Cardiac septum (tissue), 1 donor: ENCODE measurements at regions of chr5 and their contacts with region 1.

Region 1: DNA sequence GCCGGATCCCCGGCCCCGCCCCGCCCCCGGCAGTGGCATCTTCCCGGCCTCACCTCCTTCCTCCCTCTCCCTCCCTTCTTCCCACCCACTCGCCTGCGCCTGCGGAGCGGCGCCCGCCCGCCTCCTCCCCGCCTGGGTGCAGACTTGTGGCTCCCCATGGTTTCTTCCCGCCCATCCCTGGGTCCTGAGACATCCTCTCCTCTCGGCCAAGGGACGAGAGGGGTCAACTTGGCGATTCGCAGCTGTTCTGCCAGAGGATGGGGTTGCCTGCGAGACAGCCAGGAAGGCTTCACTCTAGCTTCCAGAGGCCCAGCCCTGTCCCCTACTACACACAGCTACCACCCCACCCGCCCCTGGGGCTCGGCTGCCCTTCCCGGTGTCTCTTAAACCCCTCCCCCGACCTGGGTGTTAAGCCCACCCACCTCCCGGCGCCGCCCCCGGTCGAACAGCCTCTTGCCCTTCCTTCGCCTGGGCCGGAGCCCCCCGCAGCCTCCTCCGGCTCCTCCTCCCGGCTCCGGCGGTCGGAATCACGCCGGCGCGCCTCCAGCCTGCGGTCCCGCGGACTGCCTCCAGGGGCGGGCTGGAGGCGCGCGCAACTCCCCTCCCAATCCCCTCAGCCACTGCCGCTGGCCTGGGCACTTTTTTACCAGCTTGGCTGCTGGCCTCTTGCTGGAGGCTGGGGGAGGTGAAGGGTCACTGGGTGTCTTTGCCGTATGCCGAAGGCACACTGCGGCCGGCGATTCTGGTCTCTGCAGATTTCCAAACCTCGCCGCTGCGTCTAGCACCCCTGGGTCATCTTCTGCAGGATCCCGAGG is 1.9 kb downstream of the JADE2 start:
- DNase-seq: peak; percentile 93

Region 2: DNA sequence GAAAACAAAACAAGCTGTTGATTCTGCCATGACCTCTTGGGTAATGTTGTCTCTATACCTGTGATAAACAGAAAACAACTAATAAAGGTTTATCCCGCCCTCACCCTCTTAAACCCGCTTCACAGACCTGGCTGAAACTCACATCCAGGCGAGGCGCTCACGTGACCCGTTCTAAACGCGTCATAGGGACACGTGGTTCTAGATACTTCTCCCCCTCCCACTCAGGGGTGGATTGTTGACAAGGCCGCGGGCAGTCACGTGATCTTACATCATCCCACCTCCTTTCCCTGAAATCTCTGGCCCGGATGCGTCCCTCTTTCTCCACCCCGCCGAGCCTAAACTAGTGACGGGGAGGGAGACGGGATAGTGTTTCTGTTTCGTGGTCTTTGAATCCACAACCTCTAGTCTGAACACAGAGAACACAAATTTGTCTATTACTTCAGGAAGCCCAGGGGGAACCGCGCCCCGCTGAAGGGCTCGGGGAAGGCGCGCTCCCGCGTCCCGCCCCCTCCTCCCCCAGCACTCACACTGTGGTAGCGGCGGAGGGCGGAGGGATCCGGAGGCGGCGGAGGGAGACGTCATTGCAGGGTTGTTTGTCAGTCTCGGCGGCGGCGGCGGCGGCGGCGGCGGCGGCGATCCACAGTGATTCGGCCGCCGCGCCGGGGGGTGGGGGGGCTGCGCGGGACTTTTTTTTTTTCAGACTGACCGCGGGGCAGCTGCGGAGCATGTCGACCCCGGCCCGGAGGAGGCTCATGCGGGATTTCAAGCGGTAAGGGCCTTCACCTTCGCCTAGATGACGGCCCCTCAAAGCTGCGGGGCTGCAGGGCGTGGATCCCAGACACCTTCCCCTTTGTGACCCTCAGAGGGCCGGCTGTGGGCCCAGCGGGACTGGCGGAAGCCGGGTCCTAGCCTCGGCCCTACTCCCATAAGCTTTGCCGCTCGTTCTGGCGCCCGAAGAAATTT is 156.2 kb before region 1 on chr5 and contains the start of gene UBE2B:
- intact Hi-C with region 1: loop called (anchors 1 kb)
- DNase-seq: peak; percentile 99
- total RNA-seq, gene UBE2B: 180 TPM

Region 3: DNA sequence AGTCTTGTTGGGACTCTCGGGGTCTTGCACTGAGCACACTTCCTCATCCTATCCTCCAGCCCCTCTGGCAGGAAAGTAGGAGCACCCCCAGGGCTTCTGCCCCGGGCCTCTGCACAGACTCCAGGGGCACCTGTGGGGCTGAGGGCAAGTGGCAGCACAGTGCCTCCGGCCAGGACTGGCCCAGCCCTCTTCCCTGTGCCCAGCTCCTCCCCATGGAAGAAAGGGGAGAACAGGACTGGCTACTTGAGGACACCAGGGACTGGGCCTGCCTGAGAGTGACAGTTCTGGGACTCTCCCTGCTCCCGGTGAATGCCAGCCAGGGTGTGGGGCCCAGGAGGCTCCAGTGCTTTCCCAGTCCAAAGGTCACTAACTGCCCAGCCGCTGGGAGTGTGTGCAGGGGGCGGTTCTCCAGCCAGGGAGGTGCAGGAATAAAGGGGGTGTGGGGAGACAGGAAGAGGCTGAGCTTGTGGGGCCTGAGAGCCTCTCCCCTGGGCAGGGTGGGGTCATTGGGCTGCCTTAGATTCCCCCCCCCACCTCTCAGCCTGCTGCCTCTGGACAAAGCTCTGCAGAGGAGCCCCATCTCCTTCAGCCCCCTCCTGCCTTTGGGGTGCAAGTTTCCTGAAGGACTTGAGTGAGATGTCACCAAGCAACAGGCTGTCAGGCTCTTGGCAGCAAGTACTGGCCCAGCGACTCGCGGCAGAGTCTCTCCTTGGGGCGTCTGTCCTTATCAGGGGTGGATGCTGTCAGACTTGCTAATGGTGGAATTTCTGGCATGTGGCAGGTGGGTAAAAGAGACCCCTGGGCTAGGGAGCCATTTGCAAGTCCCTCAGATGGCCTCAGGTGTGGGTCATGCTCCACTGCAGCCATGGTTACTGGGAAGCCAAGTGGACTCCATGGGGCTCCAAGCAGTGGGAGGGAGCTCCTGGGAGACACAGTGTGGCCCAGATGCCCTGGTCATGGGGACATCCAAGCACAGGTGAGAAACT is 21.0 kb before region 1 on chr5:
- intact Hi-C with region 1: loop called (anchors 2 kb)
- DNase-seq: peak; percentile 90

Region 4: DNA sequence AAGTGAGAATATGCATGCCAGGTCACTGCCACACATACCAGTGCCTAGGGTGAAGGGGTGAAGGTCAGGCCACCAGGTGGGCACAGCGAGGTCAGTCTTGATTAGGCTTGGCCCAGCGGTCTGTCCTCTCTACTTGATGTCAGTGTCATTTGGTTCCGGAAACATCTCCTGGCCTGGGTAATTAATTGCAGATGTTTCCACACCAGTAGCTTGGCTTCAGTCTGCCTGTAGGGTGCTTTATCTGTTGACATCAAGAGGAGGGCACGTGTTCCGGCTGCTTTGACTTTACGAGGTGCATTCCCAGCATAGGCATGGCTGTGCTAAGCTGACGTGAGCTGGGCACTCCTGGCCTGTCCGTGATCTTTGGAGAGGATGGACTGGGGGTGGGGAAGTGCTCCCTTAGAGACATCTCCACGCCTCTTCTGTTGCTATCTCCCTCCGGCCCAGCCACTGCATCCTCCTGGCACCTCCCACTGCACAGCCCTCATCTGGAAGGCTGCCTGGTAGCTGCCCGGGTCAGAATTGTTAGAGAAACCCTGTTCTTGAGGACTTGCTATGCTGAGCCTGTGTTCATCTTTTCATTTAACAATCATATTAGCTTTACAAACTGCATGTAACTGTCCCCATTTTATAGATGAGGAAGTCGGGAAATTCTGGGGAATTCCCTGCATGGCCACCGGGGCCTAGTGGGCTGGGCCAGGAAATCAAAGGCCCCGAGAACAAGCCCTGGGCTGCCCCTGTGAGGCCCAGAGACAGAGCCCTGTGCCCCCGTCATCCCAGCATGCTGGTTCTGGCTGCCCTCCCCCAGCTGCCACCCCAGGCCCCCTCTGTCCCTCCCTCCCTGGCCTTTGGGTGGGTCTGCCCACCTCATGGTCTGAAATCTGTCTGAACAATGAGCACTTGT is 27.2 kb after region 1 on chr5:
- intact Hi-C with region 1: loop called (anchors 1 kb)
- DNase-seq: peak; percentile 88

Region 5: DNA sequence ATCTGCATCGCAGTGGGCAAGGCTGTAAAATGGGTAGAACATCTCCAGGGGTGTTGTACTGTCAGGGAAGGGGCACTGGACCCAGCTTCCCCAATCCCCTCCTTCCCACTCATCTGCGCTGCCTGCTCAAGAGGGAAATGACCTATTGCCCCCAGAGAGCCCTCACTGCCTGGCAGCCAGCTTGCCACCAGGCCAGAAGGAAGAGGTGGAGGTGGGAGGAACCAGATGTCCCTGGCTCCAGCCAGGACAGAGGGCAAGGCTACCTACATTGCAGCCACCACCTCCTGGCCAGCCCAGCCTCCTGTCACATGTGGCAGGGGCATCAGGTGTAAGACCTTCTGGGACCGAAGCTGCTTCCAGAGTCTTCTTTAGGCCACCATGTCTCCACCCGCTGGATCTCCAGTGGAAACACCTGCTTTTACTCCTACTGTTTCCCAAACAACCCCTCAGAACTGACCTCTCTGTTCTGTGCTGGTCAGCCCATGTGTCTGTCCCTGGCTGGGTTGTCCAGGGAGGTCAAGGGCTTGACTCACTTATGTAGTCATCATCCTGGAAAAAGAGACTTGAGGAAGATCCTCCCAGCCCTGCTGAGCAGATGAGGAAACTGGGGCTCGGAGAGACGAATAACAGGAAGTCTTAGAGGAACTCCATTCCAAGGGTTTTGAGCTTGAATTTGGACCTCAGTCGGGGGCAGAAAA is 40.4 kb after region 1 on chr5:
- intact Hi-C with region 1: no loop called
- DNase-seq: no peak

Region 6: DNA sequence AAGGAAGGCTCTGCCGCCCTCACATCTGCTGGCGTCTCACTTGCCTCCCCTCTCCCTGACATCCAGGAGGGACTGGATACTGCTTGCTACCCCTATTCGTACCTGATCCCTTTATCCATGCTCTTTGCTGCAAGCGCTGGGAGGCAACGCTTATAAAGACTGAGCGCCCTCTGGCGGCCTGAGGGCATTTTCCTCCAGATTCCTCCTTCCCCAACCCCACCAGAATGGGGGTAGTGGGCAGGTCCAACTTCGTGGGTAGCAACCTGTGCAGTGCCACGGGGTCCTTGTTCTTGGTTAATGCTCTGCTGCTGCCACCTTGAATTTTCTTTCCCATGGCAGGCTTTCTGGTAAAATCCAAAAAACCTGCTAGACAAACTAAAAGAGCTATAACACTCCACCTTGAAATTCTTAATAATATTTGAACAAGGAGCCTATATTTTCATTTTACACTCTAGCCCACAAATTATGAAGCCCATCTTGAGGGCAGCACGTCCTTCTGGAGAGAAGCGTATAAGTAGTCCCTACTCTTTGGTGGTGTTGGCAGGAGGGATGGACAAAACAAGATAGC is 50.5 kb after region 1 on chr5:
- intact Hi-C with region 1: loop called (anchors 1 kb)
- DNase-seq: peak; percentile 86